CD8-positive, alpha-beta T cell (primary cell): ENCODE measurements at regions of chr19 and their contacts with region 1.

Region 1: DNA sequence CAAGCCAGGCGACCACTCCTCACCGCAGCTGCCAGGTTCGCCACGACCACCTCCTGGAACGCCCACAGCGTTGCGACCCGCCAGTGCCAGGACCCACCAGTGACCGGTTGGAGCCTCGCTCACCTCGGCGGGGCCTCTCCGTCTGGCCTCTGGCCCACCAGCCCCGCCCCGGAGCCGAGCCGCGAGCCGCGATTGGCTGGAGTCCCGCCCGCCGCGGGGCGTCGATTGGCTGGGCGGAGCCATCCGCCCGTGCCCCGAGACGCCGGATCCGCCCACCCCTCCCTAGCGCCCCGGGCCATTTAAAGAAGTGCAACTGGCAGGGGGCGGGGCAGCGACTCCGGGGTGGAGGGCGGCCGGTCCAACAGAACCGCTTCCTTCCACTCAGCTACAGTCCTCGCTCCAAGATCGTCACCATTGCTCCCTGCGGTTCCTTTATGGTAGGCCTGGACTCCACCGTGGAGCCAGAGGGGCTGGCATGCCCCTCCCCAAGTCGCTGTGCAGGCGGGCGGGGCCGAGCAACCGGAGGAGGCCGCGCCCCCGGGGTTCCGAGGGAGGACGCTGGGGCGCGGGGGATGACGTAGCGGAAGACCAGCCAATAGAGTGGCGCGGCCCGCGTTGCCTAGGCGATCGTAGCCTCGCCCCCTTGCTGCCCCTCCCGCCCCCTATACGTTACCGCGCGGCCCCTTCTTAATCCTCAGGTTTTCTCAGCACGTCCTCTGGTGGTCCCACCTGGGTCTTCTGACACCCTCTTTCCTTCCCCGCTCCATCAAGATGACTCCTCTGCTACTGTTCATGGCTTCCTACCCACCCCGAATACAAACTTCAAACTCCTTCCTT is at the start of gene SERTAD3:
- DNase-seq: peak; percentile 93 to 98 (median 97)
- ATAC-seq: peak; percentile 69
- H3K4me3 ChIP-seq: peak within 1 kb of the TSS; percentile 67 to 82
- H3K4me3 Mint-ChIP-seq: peak within 1 kb of the TSS; percentile 99
- H3K27ac ChIP-seq: peak within 1 kb of the TSS; percentile 74 to 80
- H3K27ac Mint-ChIP-seq: peak within 1 kb of the TSS; percentile 96
- H3K4me1 ChIP-seq: peaks cover 15% of the 10 kb centered on the region
- H3K4me1 Mint-ChIP-seq: peaks cover 22% of the 10 kb centered on the region
- H3K27me3 ChIP-seq: no peaks in the 10 kb centered on the region
- H3K27me3 Mint-ChIP-seq: no peaks in the 10 kb centered on the region
- CTCF ChIP-seq: no peak
- total RNA-seq, gene SERTAD3: 27.9 to 33.4 TPM

Region 2: GRCh38 chr19:39833464-39834286 is 610.7 kb before region 1 on chr19 and contains the start of gene DYRK1B:
- CTCF ChIA-PET with region 1: no interaction called
- POLR2A ChIA-PET with region 1: no interaction called
- intact Hi-C with region 1: loop called in 1 of 2 experiments (anchors 5 kb)
- DNase-seq: peak; percentile 97 to 99 (median 98)
- ATAC-seq: peak; percentile 84
- H3K4me3 ChIP-seq: peak within 1 kb of the TSS; percentile 93 to 99
- H3K4me3 Mint-ChIP-seq: peak within 1 kb of the TSS; percentile 75
- H3K27ac ChIP-seq: peak within 1 kb of the TSS; percentile 96 to 99
- H3K27ac Mint-ChIP-seq: peak within 1 kb of the TSS; percentile 90
- H3K4me1 ChIP-seq: peaks cover 23% of the 10 kb centered on the region
- H3K4me1 Mint-ChIP-seq: peaks cover 28% of the 10 kb centered on the region
- H3K27me3 ChIP-seq: no peaks in the 10 kb centered on the region
- H3K27me3 Mint-ChIP-seq: no peaks in the 10 kb centered on the region
- CTCF ChIP-seq: no peak
- total RNA-seq, gene DYRK1B: 19.0 to 22.6 TPM

Region 3: GRCh38 chr19:40285353-40286234 is 158.8 kb before region 1 on chr19:
- CTCF ChIA-PET with region 1: no interaction called
- POLR2A ChIA-PET with region 1: interaction called, 3 read pairs
- intact Hi-C with region 1: loop called (anchors 1 kb)
- DNase-seq: peak; percentile 95 to 100 (median 96)
- ATAC-seq: peak; percentile 72
- H3K4me3 ChIP-seq: peak overlapping the region; percentile 63 to 80
- H3K4me3 Mint-ChIP-seq: peak overlapping the region; percentile 98
- H3K27ac ChIP-seq: peak overlapping the region; percentile 92 to 94
- H3K27ac Mint-ChIP-seq: peak overlapping the region; percentile 99
- H3K4me1 ChIP-seq: peaks cover 38% of the 10 kb centered on the region
- H3K4me1 Mint-ChIP-seq: peaks cover 48% of the 10 kb centered on the region
- H3K27me3 ChIP-seq: no peaks in the 10 kb centered on the region
- H3K27me3 Mint-ChIP-seq: no peaks in the 10 kb centered on the region
- CTCF ChIP-seq: no peak

Region 4: GRCh38 chr19:40403262-40403984 is 41.0 kb before region 1 on chr19:
- CTCF ChIA-PET with region 1: interaction called, 3 read pairs
- POLR2A ChIA-PET with region 1: interaction called, 7 read pairs
- intact Hi-C with region 1: loop called (anchors 1 kb)
- DNase-seq: peak; percentile 56 to 83 (median 77)
- ATAC-seq: peak; percentile 55
- H3K4me3 ChIP-seq: peak overlapping the region; percentile 70 to 89
- H3K4me3 Mint-ChIP-seq: peak overlapping the region; percentile 95
- H3K27ac ChIP-seq: peak overlapping the region; percentile 56 to 63
- H3K27ac Mint-ChIP-seq: peak overlapping the region; percentile 84
- H3K4me1 ChIP-seq: peaks cover 13% of the 10 kb centered on the region
- H3K4me1 Mint-ChIP-seq: peaks cover 29% of the 10 kb centered on the region
- H3K27me3 ChIP-seq: no peaks in the 10 kb centered on the region
- H3K27me3 Mint-ChIP-seq: no peaks in the 10 kb centered on the region
- CTCF ChIP-seq: no peak

Region 5: DNA sequence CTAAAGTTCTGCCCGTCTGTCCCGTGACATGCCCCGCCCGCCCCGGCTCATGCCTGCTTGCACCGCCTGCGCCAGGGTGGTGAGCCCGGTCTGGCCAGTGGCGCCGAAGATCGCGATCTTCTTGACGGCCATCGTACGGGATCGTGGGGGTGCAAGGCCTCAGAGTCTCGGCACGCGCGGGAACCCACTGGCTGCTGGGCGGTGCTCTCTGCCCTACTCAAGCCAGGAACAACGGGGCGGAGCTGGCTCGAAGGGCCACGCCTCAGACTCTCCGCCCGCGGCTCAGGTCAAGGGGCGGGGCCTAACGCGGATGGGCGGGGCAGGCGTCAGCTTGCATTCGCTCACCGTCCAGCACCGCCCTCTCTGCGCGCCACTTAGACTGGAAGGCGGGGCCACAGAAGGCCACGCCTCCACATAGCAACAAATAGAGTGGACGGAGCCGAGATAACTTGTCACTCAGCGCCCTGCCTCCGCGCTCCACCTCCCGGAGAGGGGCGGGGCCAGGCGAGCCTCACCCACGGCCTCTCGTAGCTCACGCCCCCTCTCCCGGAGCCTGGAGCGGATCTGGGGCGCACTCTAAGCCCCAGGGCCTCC is 21.2 kb after region 1 on chr19 and contains the start of gene BLVRB:
- CTCF ChIA-PET with region 1: interaction called, 4 read pairs
- POLR2A ChIA-PET with region 1: interaction called, 4 read pairs
- intact Hi-C with region 1: loop called (anchors 1 kb)
- DNase-seq: peak; percentile 98 to 100 (median 100)
- ATAC-seq: peak; percentile 77
- H3K4me3 ChIP-seq: peak within 1 kb of the TSS; percentile 60 to 72
- H3K4me3 Mint-ChIP-seq: peak within 1 kb of the TSS; percentile 81
- H3K27ac ChIP-seq: peak within 1 kb of the TSS; percentile 41 to 93
- H3K27ac Mint-ChIP-seq: peak within 1 kb of the TSS; percentile 89
- H3K4me1 ChIP-seq: peaks cover 25% of the 10 kb centered on the region
- H3K4me1 Mint-ChIP-seq: peaks cover 26% of the 10 kb centered on the region
- H3K27me3 ChIP-seq: peaks cover 0 to 2% of the 10 kb centered on the region in 2 experiments
- H3K27me3 Mint-ChIP-seq: peaks cover 13% of the 10 kb centered on the region
- CTCF ChIP-seq: no peak
- total RNA-seq, gene BLVRB: 5.1 to 6.4 TPM

Region 6: GRCh38 chr19:40603389-40604135 is 159.2 kb after region 1 on chr19:
- CTCF ChIA-PET with region 1: no interaction called
- POLR2A ChIA-PET with region 1: no interaction called
- intact Hi-C with region 1: loop called in 1 of 2 experiments (anchors 2 kb)
- DNase-seq: peak; percentile 92 to 98 (median 96)
- ATAC-seq: peak; percentile 73
- H3K4me3 ChIP-seq: peak overlapping the region; percentile 54 to 58
- H3K4me3 Mint-ChIP-seq: peak overlapping the region; percentile 89
- H3K27ac ChIP-seq: peak overlapping the region in 1 of 2 experiments; percentile 39
- H3K27ac Mint-ChIP-seq: peak overlapping the region; percentile 76
- H3K4me1 ChIP-seq: peaks cover 73% of the 10 kb centered on the region
- H3K4me1 Mint-ChIP-seq: peaks cover 66% of the 10 kb centered on the region
- H3K27me3 ChIP-seq: peaks cover 23 to 34% of the 10 kb centered on the region in 2 experiments
- H3K27me3 Mint-ChIP-seq: peaks cover 20% of the 10 kb centered on the region
- CTCF ChIP-seq: no peak

Region 7: DNA sequence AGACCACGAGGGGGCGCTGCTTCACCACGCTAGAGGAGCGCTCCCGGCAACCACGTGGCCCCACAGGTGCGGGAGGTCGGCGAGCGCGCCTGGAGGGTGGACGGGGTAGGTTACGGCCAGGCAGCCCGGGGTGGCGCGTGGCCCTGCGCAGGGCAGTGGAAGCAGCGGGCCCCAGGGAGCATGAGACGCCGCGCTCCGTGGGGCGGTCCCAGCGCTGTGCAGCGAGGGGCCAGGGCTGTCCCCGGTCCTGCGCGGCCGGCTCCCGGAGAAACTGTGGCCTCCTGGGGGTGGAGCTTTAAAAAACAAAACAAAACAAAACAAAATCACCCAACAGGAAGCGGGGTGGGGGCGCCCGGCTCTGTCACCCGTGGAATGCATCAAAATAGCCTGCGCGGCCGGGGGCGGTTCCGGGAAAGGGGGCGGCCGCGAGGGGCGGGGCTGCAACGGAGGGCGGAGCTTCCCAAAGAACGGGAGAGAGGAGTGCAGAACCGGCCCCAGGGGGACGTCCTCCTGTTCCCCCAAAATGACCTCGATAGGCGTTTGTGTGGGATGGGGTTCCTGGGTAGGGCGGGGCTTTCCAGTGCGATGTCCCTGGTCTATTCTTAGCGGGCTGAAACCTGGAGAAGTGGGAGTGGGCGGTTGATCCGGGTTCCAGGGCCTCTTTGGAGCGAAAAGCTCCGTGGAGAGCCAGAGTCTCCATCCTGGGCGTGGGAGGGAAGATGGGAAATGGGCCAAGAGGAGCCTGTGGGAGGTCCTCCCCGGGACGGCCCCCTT is 218.7 kb after region 1 on chr19:
- CTCF ChIA-PET with region 1: no interaction called
- POLR2A ChIA-PET with region 1: no interaction called
- intact Hi-C with region 1: no loop called
- DNase-seq: peak; percentile 86 to 98 (median 94)
- ATAC-seq: peak; percentile 82
- H3K4me3 ChIP-seq: peak overlapping the region; percentile 66 to 67
- H3K4me3 Mint-ChIP-seq: peak overlapping the region; percentile 87
- H3K27ac ChIP-seq: peak overlapping the region; percentile 49 to 70
- H3K27ac Mint-ChIP-seq: peak overlapping the region; percentile 80
- H3K4me1 ChIP-seq: peaks cover 11% of the 10 kb centered on the region
- H3K4me1 Mint-ChIP-seq: peaks cover 8% of the 10 kb centered on the region
- H3K27me3 ChIP-seq: no peaks in the 10 kb centered on the region
- H3K27me3 Mint-ChIP-seq: no peaks in the 10 kb centered on the region
- CTCF ChIP-seq: peak; percentile 95

Region 8: GRCh38 chr19:41397086-41398049 is 953.0 kb after region 1 on chr19 and contains the starts of genes BCKDHA and EXOSC5:
- CTCF ChIA-PET with region 1: no interaction called
- POLR2A ChIA-PET with region 1: no interaction called
- intact Hi-C with region 1: loop called in 1 of 2 experiments (anchors 1 kb)
- DNase-seq: peak; percentile 97 to 100 (median 99)
- ATAC-seq: peak; percentile 97
- H3K4me3 ChIP-seq: peak within 1 kb of the TSS; percentile 84 to 97
- H3K4me3 Mint-ChIP-seq: peak within 1 kb of the TSS; percentile 98
- H3K27ac ChIP-seq: peak within 1 kb of the TSS; percentile 98
- H3K27ac Mint-ChIP-seq: peak within 1 kb of the TSS; percentile 100
- H3K4me1 ChIP-seq: peaks cover 28% of the 10 kb centered on the region
- H3K4me1 Mint-ChIP-seq: peaks cover 47% of the 10 kb centered on the region
- H3K27me3 ChIP-seq: no peaks in the 10 kb centered on the region
- H3K27me3 Mint-ChIP-seq: no peaks in the 10 kb centered on the region
- CTCF ChIP-seq: no peak
- total RNA-seq, gene BCKDHA: 19.4 to 20.5 TPM
- total RNA-seq, gene EXOSC5: 4.1 to 5.5 TPM